Activated CD4-positive, alpha-beta T cell treated with anti-CD3 and anti-CD28 coated beads for 36 hours (primary cell): ENCODE measurements at regions of chr4 and their contacts with region 1.

Region 1: GRCh38 chr4:3193531-3194203 is 55.3 kb upstream of the MSANTD1 start:
- DNase-seq: no peak
- ATAC-seq: no peak
- H3K4me3 Mint-ChIP-seq: no peak overlapping the region
- H3K27ac Mint-ChIP-seq: no peak overlapping the region
- H3K4me1 Mint-ChIP-seq: peaks cover 51% of the 10 kb centered on the region
- H3K27me3 Mint-ChIP-seq: no peaks in the 10 kb centered on the region

Region 2: GRCh38 chr4:3442959-3443749 is 249.5 kb after region 1 on chr4:
- CTCF ChIA-PET with region 1: no interaction called
- POLR2A ChIA-PET with region 1: no interaction called
- intact Hi-C with region 1: loop called in 1 of 2 experiments (anchors 1 kb)
- DNase-seq: peak; percentile 83
- ATAC-seq: peak; percentile 89
- H3K4me3 Mint-ChIP-seq: no peak overlapping the region
- H3K27ac Mint-ChIP-seq: no peak overlapping the region
- H3K4me1 Mint-ChIP-seq: no peaks in the 10 kb centered on the region
- H3K27me3 Mint-ChIP-seq: no peaks in the 10 kb centered on the region

Region 3: GRCh38 chr4:3480528-3481112 is 287.0 kb after region 1 on chr4:
- CTCF ChIA-PET with region 1: no interaction called
- POLR2A ChIA-PET with region 1: no interaction called
- intact Hi-C with region 1: loop called in 1 of 2 experiments (anchors 5 kb)
- DNase-seq: peak; percentile 87
- ATAC-seq: peak; percentile 87
- H3K4me3 Mint-ChIP-seq: no peak overlapping the region
- H3K27ac Mint-ChIP-seq: no peak overlapping the region
- H3K4me1 Mint-ChIP-seq: no peaks in the 10 kb centered on the region
- H3K27me3 Mint-ChIP-seq: peaks cover 14% of the 10 kb centered on the region